Activated T-helper 1 cell treated with anti-CD3 and anti-CD28 coated beads, Interleukin-12 subunit alpha, Interleukin-12 subunit beta, Interleukin-2, Interleukin-4 antibody, amounts not matched to agents 30 ng/mL and 10 ng/mL and 1 ng/mL, durations not matched to agents 14 hours and 24 hours and 36 hours (primary cell): ENCODE measurements at regions of chr11 and their contacts with region 1.

Region 1: DNA sequence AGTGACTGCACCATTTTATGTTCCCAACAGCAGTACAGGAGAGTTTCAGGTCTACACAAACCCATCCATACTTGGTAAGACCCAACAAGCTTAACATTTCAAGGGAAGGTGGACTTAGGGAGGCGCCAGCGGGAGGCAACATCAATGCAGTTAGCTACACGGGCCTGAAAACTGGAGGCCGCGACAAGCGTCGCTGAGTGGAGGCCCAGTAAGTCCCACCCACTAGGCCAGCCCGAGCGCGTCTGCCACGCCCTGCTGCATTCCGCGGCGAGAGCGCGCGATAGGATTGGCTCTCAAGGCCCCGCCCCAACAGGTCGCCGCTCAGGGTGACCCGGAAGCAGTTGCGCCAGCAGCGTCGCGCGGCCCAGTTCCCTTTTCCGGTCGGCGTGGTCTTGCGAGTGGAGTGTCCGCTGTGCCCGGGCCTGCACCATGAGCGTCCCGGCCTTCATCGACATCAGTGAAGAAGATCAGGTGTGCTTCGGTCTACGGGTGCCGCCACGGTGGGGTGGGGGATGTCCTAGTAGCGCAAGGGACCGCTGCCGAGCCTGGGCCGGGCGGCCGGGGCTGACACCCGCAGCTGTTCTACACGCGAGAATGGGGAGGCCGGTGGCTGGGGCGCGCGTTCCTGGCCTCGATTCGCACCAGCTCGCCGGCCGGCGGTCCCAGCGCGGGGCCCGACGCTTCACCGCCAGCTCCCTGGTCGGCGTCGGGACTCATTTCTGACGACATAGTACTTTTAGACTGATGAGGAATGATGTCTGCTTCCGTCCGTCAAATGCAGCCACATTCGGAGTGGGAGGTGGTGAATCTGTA is at the start of gene EIF3M:
- DNase-seq: peak; percentile 94
- H3K4me3 Mint-ChIP-seq: peak within 1 kb of the TSS; percentile 98
- H3K27ac Mint-ChIP-seq: peak within 1 kb of the TSS; percentile 98
- H3K4me1 Mint-ChIP-seq: peaks cover 38% of the 10 kb centered on the region
- H3K27me3 Mint-ChIP-seq: no peaks in the 10 kb centered on the region
- total RNA-seq, gene EIF3M: 315 and 332 TPM in 2 replicates

Region 2: DNA sequence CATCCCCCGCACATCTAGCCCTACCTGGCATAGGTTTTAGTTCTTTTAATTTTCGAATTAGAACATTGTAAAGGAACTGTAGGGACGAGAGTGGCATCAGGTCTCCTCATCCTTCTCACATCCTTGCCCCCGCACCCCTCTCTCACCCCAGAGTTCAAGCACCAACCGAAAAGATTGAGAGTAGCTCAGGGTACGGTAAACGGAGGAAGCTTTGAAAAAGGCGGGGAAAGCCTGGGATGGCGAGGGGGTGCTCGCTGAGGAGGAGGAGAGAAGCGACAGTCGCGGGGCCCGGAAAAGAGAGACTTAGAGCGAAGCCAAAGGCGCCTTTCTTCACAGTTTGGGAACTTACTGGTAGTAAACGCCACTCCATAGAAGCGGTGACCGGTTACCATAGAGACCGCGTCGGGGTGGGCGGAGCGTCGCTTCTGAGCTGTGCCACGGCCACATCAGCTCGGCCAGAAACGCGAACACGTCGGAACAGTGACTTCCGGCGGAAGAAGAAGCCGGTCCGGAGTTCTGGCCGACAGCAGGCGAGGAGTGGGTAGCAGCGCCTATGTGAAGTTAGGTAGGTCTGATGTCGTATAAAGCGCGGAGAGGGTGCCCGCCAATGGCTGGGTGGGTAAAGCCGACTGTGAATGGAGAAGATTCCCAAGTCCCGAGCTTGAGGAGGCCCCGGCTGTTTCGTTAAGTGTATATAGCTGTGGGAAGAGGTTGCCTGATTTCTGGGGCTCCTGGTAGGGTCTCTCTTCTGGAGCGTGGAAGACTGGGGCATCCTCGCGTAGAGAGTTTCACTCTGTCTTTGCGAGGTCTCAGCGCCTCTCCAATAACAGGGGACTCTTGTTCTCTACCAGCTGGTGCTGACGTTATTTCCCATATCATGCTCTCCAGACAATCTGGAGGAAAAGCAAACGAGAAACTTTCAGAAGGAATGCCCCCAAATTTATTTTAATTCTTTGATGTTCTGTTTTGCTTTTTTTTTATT is 1214.0 kb before region 1 on chr11 and contains the starts of genes DCDC1 and DNAJC24:
- intact Hi-C with region 1: loop called (anchors 5 kb)
- DNase-seq: peak; percentile 89
- H3K4me3 Mint-ChIP-seq: peak within 1 kb of the TSS; percentile 99
- H3K27ac Mint-ChIP-seq: peak within 1 kb of the TSS; percentile 95
- H3K4me1 Mint-ChIP-seq: peaks cover 25% of the 10 kb centered on the region
- H3K27me3 Mint-ChIP-seq: peaks cover 7% of the 10 kb centered on the region
- total RNA-seq, gene DCDC1: not detected in 2 replicates
- total RNA-seq, gene DNAJC24: 15.8 and 20.6 TPM in 2 replicates

Region 3: DNA sequence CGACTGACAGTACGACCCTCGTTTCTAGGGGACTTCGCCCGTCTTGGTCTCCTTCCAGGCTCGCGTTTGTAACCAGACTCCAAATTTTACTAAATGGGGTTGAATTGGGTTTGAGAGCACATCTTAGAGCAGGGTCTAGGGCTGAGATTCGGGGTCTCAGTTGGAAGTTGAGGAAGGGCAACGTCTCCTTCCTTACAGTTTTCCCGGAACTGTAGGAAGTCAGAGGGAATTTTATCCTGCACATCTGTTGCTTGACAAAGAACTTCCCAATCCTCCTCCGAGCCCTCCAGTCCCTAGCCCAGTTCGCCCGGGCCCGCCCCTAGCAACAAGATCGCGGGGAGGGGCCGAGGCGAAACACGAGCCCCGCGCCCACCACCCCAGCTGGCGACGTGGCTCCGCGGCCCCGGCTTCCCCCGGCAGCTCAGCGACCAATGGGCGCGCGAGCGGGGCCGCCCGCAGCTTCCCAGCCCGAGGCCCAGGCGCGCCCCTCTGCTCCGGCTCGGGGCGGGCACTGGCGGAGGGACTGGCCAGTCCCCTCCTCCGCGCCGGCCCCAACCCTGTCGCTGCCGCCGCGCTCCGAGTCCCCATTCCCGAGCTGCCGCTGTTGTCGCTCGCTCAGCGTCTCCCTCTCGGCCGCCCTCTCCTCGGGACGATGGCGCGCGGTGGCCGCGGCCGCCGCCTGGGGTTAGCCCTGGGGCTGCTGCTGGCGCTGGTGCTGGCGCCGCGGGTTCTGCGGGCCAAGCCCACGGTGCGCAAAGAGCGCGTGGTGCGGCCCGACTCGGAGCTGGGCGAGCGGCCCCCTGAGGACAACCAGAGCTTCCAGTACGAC is 492.9 kb before region 1 on chr11 and contains the start of gene RCN1:
- intact Hi-C with region 1: loop called (anchors 2 kb)
- DNase-seq: peak; percentile 30
- H3K4me3 Mint-ChIP-seq: peak within 1 kb of the TSS; percentile 85
- H3K27ac Mint-ChIP-seq: peak within 1 kb of the TSS; percentile 88
- H3K4me1 Mint-ChIP-seq: peaks cover 41% of the 10 kb centered on the region
- H3K27me3 Mint-ChIP-seq: peaks cover 4% of the 10 kb centered on the region
- total RNA-seq, gene RCN1: 30.9 and 36.5 TPM in 2 replicates

Region 4: DNA sequence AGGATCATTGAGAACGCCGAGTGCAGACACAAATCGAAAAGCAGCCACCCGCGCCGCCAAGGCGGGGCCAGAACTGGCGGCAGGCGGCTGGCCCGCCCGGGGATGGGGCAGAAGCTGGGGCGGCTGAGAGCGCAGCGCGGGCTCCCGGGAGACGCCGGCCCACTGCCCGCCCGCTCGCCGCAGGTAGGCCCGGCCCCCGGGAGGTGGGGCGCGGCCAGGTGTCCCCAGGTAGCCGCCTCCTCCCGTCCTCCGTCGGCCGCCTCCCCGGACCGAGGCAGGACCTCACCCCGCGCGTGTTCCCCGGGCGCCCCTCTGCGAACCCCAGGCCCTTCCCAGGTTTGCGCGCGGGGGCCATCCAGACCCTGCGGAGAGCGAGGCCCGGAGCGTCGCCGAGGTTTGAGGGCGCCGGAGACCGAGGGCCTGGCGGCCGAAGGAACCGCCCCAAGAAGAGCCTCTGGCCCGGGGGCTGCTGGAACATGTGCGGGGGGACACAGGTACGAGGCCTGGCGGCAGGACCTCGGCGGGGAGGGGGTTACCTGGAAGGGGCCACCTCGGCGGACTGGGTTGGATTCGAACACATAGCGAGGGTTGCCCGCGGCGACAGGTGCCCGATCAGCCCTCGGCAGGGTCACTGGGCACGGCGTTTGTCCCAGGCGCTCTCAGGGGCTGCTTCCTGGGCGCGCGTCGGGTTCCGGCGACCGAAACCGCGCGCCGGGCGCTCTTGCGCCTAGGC is 246.2 kb after region 1 on chr11 and contains the start of gene PRRG4:
- intact Hi-C with region 1: loop called (anchors 5 kb)
- DNase-seq: peak; percentile 46
- H3K4me3 Mint-ChIP-seq: peak within 1 kb of the TSS; percentile 90
- H3K27ac Mint-ChIP-seq: peak within 1 kb of the TSS; percentile 82
- H3K4me1 Mint-ChIP-seq: peaks cover 7% of the 10 kb centered on the region
- H3K27me3 Mint-ChIP-seq: peaks cover 23% of the 10 kb centered on the region
- total RNA-seq, gene PRRG4: 0.83 and 0.91 TPM in 2 replicates

Region 5: GRCh38 chr11:33161120-33162005 is 577.7 kb after region 1 on chr11 and contains the start of gene CSTF3:
- intact Hi-C with region 1: loop called (anchors 1 kb)
- DNase-seq: peak; percentile 91
- H3K4me3 Mint-ChIP-seq: peak within 1 kb of the TSS; percentile 100
- H3K27ac Mint-ChIP-seq: peak within 1 kb of the TSS; percentile 100
- H3K4me1 Mint-ChIP-seq: peaks cover 40% of the 10 kb centered on the region
- H3K27me3 Mint-ChIP-seq: no peaks in the 10 kb centered on the region
- total RNA-seq, gene CSTF3: 34.9 and 36.5 TPM in 2 replicates

Region 6: GRCh38 chr11:34105079-34105956 is 1521.7 kb after region 1 on chr11 and contains the start of gene NAT10:
- intact Hi-C with region 1: loop called (anchors 10 kb)
- DNase-seq: peak; percentile 97
- H3K4me3 Mint-ChIP-seq: peak within 1 kb of the TSS; percentile 95
- H3K27ac Mint-ChIP-seq: peak within 1 kb of the TSS; percentile 90
- H3K4me1 Mint-ChIP-seq: peaks cover 48% of the 10 kb centered on the region
- H3K27me3 Mint-ChIP-seq: no peaks in the 10 kb centered on the region
- total RNA-seq, gene NAT10: 157 and 158 TPM in 2 replicates